ENCODE measurements at regions of chr12 and their contacts with region 1.

Region 1: DNA sequence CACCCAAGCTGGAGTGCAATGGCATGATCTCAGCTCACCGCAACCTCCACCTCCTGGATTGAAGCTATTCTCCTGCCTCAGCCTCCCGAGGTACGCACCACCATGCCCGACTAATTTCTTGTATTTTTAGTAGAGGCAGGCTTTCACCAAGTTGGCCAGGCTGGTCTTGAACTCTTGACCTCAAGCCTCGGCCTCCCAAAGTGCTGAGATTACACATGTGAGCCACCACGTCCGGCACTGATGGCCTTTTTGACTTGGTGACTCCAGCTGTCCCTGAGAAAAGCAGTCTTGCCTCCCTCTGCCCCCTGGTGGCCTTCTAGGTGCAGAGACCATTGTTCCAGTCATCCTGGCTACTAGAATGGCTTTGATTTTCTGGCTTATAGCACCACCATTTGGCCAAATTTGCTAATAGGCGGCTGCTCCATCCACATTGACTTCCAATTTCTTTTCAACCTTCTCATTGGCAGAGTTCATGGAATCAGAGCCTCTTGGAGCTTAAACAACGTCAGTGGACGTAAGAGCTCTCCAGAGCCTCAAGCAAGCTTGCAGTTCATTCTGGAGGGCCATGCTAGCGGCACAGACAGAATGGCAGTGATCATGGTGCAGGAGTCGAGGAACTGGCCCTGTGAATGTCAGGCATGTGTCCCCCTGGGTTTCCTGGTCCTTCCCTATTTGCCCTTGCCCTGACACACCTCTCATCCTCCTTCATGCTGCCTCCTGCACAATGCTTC is 25.4 kb upstream of the EIF4B start:
- DNase-seq: peak; percentile 97

Region 2: GRCh38 chr12:52372216-52373154 is 608.4 kb before region 1 on chr12:
- in situ Hi-C with region 1: loop called (anchors 25 kb)
- DNase-seq: peak; percentile 83

Region 3: DNA sequence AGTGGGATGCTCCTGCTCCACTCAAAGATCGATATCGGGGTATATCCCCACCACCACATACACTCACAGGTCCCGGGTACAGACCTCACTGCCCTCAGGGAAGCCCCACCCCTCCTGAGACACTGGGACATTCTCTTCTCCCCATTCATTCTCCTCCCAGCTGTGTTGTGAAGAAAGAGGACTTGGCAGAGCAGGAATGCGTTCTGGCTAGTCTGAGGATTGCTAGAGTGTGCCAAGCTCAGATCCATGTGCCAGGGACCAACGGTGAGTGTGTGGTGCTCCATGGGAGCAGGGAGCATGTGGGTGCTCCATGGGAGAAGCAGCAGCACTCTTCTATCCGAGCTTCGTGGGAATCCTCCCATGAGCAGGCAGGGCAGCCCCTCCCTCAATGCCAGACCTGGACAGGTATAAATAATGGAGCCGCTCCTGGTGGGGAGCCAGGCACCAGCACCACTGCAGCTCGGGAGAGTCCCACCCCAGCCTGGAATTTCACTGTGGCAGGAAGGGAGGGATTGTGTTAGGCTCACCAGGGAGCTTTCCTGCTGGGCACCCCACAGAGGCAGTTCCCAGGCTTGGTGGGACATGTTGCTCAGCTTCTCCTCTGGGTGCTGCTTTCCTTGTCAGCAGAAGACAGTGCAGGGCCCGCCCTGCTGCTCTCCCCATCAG is 458.4 kb before region 1 on chr12:
- in situ Hi-C with region 1: no loop called
- DNase-seq: no peak

Region 4: GRCh38 chr12:52879394-52880351 is 101.2 kb before region 1 on chr12:
- in situ Hi-C with region 1: loop called (anchors 25 kb)
- DNase-seq: peak; percentile 93

Region 5: GRCh38 chr12:52906774-52907486 is 73.9 kb before region 1 on chr12:
- in situ Hi-C with region 1: no loop called
- DNase-seq: no peak